HepG2 (cell line): ENCODE measurements at regions of chr11 and their contacts with region 1.

Region 1: DNA sequence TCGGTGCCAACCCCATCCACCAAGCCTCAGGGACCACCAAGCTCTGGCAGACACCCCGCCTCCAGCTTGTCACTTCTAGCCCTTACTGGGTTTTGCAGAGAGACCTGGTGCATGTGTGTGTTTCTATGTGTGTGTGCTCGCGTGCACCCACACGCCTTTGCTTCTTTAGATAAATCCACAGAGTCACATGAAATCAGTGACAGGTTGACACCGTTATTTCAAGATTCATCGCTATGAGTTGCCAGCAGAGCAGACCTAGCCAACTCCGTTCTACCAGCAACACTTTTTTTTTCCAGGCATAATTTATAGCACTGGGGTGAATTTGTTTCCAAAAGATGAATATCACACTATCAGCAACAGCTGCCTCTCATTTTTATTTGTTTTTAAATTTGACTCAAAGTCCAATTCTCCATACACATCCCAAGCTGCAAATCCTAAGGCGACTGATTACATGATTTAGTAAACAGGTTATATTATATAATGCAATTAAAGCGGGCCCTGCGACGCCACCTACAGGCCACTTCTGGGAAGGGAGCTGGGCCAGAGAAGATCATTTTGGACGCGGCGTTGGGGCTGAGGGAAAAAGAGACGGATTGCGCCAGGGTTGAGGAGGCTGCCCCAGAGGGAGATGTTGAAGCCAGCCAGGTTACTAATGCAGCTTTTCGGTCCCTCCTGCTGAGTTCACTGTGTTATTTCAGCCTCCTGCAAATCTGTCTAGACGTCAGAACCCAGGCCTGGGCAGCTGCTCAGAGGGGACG is 150.5 kb downstream of the FEZ1 start:
- DNase-seq: peak; percentile 15
- ATAC-seq: peak; percentile 62
- H3K4me3 ChIP-seq: no peak overlapping the region
- H3K27ac ChIP-seq: no peak overlapping the region
- H3K4me1 ChIP-seq: no peaks in the 10 kb centered on the region
- H3K27me3 ChIP-seq: peaks cover 5 to 57% of the 10 kb centered on the region in 2 experiments; a peak in 3 of 5 replicates
- CTCF ChIP-seq: peak; percentile 64
- EP300 ChIP-seq: no peak; a peak in 1 of 4 replicates
- POLR2A ChIP-seq: no peak
- RAD21 ChIP-seq: no peak

Region 2: GRCh38 chr11:124961972-124962609 is 383.5 kb before region 1 on chr11:
- CTCF ChIA-PET with region 1: no interaction called
- POLR2A ChIA-PET with region 1: no interaction called
- in situ Hi-C with region 1: loop called (anchors 10 kb)
- intact Hi-C with region 1: loop called (anchors 2 kb)
- DNase-seq: peak; percentile 78
- ATAC-seq: peak; percentile 93
- H3K4me3 ChIP-seq: no peak overlapping the region
- H3K27ac ChIP-seq: no peak overlapping the region
- H3K4me1 ChIP-seq: no peaks in the 10 kb centered on the region
- H3K27me3 ChIP-seq: no peaks in the 10 kb centered on the region
- CTCF ChIP-seq: peak; percentile 87
- EP300 ChIP-seq: no peak
- POLR2A ChIP-seq: no peak
- RAD21 ChIP-seq: peak; percentile 67

Region 3: GRCh38 chr11:125329786-125330185 is 15.8 kb before region 1 on chr11:
- CTCF ChIA-PET with region 1: no interaction called
- POLR2A ChIA-PET with region 1: no interaction called
- in situ Hi-C with region 1: no loop called
- intact Hi-C with region 1: no loop called
- DNase-seq: no peak
- ATAC-seq: no peak
- H3K4me3 ChIP-seq: no peak overlapping the region
- H3K27ac ChIP-seq: no peak overlapping the region
- H3K4me1 ChIP-seq: no peaks in the 10 kb centered on the region
- H3K27me3 ChIP-seq: peaks cover 0 to 33% of the 10 kb centered on the region in 2 experiments; a peak in 3 of 5 replicates
- CTCF ChIP-seq: no peak
- EP300 ChIP-seq: no peak
- POLR2A ChIP-seq: no peak
- RAD21 ChIP-seq: no peak